Activated CD4-positive, alpha-beta T cell treated with anti-CD3 and anti-CD28 coated beads, Interleukin-2, amount 10 ng/mL, durations not matched to agents 7 days and 5 days (primary cell): ENCODE measurements at regions of chr17 and their contacts with region 1.

Region 1: DNA sequence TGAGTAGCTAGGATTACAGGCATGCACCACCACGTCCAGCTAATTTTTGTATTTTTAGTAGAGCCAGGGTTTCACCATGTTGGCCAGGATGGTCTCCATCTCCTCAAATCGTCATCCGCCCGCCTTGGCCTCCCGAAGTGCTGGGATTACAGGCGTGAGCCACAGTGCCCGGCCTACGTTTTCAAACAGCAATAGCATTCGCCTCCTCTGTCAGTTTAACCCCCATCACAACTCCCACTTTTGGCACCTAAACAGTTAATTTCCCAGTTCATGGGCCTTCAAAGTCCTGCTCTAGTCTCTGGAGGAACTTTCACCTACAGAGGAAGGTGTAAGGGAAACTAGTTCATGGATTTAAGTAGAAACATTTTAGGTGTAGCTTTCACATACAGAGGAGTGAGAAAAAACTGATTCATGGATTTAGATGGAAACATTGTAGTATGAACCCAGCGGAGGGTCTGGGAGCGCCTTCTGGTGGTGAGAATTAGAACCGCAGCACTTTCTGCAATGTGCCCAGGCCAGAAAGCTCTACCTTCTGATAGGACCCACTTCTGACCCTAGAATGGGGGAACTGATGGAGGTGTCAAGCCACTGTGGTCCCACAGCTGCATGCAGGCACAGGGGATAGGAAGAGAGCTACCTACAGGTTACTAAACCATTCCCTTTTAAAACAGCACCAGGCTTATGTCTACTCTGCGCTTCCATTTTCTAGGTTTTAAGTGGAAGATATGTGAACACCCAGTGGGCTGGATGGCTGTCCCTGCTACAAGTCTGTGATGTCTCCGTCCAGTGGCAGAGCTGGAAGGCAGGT is 12.0 kb upstream of the MEOX1 start:
- DNase-seq: peak; percentile 73
- H3K4me3 Mint-ChIP-seq: no peak overlapping the region
- H3K27ac Mint-ChIP-seq: no peak overlapping the region
- H3K4me1 Mint-ChIP-seq: peaks cover 31% of the 10 kb centered on the region
- H3K27me3 Mint-ChIP-seq: peaks cover 5% of the 10 kb centered on the region

Region 2: GRCh38 chr17:43388359-43389045 is 285.2 kb before region 1 on chr17:
- CTCF ChIA-PET with region 1: no interaction called
- POLR2A ChIA-PET with region 1: no interaction called
- DNase-seq: peak; percentile 93
- H3K4me3 Mint-ChIP-seq: peak overlapping the region; percentile 85
- H3K27ac Mint-ChIP-seq: peak overlapping the region; percentile 97
- H3K4me1 Mint-ChIP-seq: peaks cover 28% of the 10 kb centered on the region
- H3K27me3 Mint-ChIP-seq: no peaks in the 10 kb centered on the region

Region 3: DNA sequence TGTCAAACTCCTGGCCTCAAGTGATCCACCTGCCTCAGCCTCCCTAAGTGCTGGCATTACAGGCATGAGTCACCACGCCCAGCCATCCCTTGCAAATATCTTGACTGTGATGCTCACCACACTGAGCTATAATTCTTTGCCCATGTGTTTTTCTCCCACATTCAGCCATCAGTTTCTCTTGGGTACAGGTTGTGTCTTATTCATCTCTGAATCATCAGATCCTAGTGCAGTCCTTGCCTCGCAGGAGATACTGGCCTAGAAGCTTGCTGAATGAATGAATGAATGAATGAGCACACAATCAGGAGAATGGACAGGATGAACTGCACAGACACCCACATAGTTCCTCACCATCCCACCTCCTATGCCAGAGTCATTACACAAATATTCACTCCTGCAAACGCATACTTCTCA is 103.2 kb before region 1 on chr17:
- CTCF ChIA-PET with region 1: interaction called, 14 read pairs
- POLR2A ChIA-PET with region 1: no interaction called
- DNase-seq: no peak
- H3K4me3 Mint-ChIP-seq: no peak overlapping the region
- H3K27ac Mint-ChIP-seq: no peak overlapping the region
- H3K4me1 Mint-ChIP-seq: peaks cover 5% of the 10 kb centered on the region
- H3K27me3 Mint-ChIP-seq: peaks cover 6% of the 10 kb centered on the region

Region 4: DNA sequence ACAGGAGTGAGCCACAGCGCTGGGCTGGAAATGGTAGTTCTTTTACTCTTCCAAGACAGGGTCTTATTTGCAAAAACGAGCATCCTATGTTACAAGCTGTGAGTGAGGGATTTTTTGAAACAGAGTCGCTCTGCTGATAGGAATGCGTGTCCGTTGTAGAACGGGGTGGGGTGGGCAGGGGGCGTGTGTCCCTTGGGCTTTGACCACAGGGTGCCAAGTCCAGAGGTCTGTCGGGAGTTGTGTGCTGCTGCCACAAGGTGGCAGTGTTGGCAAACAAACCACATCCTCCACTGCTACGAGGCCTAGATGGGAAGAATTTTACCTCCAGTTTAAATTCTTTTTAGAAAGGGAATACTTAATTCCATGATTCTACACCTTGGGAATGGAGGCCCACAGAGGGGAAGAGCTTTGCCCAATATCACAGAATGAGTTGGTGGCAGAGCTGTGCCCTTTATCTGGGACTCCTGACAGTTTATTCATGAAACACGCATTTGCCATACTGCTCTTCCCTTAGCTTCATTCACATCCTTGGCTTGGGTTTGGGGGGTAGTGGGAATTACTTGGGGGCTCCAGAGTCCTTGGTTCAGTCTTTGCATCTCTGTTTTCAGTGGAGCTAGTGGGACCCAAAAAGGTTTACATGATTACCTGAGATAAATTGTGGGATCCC is 97.0 kb before region 1 on chr17:
- CTCF ChIA-PET with region 1: interaction called, 14 read pairs
- POLR2A ChIA-PET with region 1: no interaction called
- DNase-seq: peak; percentile 67
- H3K4me3 Mint-ChIP-seq: no peak overlapping the region
- H3K27ac Mint-ChIP-seq: no peak overlapping the region
- H3K4me1 Mint-ChIP-seq: peaks cover 27% of the 10 kb centered on the region
- H3K27me3 Mint-ChIP-seq: peaks cover 9% of the 10 kb centered on the region

Region 5: GRCh38 chr17:43740541-43740940 is 66.8 kb after region 1 on chr17:
- CTCF ChIA-PET with region 1: no interaction called
- POLR2A ChIA-PET with region 1: no interaction called
- DNase-seq: no peak
- H3K4me3 Mint-ChIP-seq: no peak overlapping the region
- H3K27ac Mint-ChIP-seq: no peak overlapping the region
- H3K4me1 Mint-ChIP-seq: no peaks in the 10 kb centered on the region
- H3K27me3 Mint-ChIP-seq: peaks cover 36% of the 10 kb centered on the region